ENCODE measurements at regions of chr20 and their contacts with region 1.

Region 1: GRCh38 chr20:40689943-40690835 is 1.2 kb upstream of the MAFB start:
- DNase-seq: peak; percentile 94
- ATAC-seq: peak; percentile 61 to 65

Region 2: DNA sequence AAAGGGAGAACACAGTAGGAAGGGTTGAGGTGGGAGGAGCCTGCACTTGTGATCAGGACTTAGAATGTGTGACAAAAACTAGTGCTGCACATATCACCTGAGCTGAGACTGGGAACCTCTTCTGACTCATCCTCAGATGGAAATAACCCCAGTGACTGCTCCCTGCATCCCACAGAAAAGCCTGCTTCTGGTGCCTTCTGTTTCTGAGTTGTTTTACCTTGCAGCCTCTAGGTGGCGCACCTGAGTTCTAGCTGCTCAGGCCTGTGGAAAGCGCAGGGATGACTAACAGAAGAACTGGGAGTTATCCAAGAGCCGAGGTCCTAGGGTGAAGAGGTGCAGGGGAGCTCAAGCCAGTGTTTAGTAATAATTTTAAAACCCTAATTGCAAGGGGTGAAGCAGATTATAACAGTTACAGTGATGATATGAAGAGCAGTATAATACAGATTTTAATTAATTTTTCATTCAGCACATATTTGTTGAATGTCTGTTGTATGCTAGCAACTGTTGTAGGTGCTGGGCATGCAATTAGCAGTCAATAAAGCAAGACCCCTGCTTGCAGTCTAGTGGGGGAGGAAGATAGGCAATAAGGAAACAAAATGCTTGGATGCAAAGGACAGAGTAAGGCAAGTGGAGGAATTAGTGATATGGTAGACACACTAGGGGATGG is 1425.5 kb before region 1 on chr20:
- intact Hi-C with region 1: loop called in 1 of 2 experiments (anchors 10 kb)
- DNase-seq: peak; percentile 69
- ATAC-seq: peak; percentile 69 to 78

Region 3: GRCh38 chr20:39829256-39829655 is 860.9 kb before region 1 on chr20:
- intact Hi-C with region 1: loop called (anchors 10 kb)
- DNase-seq: no peak
- ATAC-seq: peak in 1 of 2 donors; percentile 12

Region 4: DNA sequence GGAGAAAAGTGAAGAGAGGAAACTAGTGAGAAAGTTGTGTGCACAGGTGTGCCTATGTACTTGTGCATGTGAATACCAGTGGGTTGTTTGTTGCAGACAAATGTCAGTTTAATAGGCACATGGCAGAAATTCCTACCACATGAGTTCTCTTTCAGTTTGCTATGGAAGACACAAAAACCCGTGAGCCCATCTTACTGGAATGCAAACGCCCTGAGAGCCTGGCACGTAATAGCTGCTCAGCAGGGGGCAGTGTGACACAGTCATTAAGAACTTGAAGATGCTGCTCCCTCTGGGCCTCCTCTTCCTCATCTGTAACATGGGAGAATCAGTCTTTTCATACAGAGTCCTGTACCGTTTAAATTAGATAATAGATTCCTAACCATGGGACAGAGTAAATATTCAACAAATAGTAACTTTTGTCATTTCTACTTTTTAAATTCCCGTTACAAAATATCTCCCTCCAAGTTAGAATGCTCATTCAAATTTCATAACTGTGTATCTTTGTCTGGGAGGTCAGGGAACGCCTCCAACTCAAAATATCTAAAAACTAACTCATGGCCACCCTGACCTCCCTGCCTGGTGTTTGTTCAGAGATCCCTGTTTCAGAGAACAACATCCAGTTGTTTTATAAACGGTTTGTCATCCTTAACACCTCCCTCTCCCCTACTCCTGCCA is 804.1 kb before region 1 on chr20:
- intact Hi-C with region 1: loop called in 1 of 2 experiments (anchors 10 kb)
- DNase-seq: peak; percentile 78
- ATAC-seq: peak; percentile 78 to 89

Region 5: DNA sequence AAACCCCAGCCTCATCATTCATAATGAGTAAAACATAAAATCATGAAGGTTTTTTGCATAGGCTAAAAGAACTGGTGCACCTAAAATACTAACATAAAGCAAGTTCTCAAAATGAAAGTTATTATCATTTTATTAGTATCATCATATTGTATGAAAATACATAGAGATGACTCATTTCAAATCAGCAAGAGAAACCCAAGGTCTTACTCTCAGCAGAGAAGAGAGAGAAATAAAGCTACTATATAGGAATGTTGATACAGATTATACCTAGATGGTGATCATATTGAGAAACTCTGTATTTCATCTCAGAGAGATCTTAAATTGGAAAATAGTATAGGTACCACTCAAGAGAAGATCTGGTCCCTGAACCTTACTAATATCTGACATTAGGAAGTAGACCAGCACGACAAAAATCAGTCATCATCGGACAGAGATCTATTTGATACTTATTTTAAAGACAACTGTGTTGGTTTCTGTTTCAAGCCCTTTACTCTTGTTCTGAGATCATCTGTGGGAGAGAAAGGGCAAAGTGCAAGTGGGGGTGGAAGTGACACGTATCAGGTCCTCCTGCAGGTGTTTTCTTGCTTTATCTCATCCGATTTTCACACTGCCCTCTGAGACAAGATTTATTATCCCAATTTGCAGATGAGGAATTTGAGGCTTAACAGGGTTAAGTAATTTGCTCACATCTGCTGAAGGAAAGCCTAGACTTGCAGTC is 533.4 kb before region 1 on chr20:
- intact Hi-C with region 1: loop called in 1 of 2 experiments (anchors 10 kb)
- DNase-seq: no peak
- ATAC-seq: no peak

Region 6: DNA sequence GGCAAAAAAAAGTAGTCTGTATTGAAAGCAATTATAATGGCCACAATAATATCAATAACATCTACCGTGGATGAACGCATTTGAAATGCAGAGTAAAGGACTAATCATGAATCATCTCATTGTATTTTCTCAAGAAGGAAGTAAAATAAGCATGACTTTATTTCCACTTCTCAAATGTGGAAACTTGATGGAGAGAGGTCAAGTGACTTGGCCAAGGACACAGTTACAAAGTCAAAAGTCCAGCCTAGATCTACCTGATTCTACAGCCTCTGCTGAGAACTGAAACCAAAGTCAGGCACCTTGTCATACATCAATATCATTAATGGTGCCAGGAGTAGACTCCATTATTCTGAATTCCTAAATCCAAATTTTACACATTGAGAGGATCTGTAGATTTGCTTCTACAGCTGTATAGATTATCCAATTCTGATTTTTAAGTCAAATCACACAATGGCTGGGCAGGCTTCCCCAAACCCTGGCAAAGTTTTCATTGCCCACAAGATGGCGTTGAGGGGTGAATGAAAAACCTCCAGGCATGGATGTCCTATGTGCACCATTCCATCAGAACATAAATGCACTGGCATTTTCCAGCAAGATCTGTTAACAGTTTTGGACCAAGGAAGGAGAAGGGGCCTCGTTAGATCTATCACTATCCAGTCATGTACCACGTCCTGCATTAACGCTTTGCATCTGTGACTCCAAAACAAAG is 424.2 kb before region 1 on chr20:
- intact Hi-C with region 1: loop called (anchors 10 kb)
- DNase-seq: no peak
- ATAC-seq: peak; percentile 41 to 73

Region 7: GRCh38 chr20:40471261-40471629 is 218.9 kb before region 1 on chr20:
- intact Hi-C with region 1: loop called in 1 of 2 experiments (anchors 5 kb)
- DNase-seq: no peak
- ATAC-seq: peak; percentile 54 to 68

Region 8: DNA sequence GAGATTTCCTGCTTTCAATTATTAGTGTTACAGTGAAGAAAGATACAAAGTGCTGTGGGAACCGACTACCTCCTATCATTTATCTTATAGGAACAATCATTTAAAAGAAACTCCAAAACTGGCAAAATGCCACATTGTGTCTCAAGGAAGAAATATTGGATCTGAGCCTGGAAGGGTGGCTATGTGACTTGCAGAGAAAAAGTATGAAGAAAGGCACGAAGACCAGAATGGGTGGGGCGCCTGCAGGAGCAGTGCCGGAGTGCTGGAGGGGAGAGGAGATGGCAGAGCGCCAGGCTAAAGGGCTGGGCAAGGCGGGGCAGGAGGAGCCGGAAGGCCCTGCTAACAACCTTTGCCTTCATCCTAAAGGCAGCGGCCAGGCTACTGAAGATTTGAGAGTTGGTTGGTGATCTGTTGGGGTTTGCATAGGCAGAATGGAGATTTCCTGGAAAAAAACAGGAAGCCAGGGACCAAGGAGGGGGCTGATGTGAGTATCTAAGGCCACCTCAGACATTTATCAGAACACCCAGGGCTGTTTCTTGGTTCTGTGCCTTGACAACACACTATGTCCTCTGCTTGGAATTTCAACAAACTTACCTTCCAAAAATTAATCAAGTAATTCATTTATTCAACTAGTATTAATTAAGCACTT is 126.8 kb before region 1 on chr20:
- intact Hi-C with region 1: no loop called
- DNase-seq: peak; percentile 62
- ATAC-seq: peak in 1 of 2 donors; percentile 30

Region 9: GRCh38 chr20:40896814-40897700 is 206.9 kb after region 1 on chr20:
- intact Hi-C with region 1: no loop called
- DNase-seq: no peak
- ATAC-seq: no peak

Measured in left cardiac atrium (tissue), 4 donors.